Activated T-helper 2 cell treated with anti-CD3 and anti-CD28 coated beads, Interferon-gamma antibody, Interleukin-2, Interleukin-4, amounts not matched to agents 10 μg/mL and 5 μg/mL and 100 μg/mL, durations not matched to agents 14 hours and 24 hours and 36 hours (primary cell): ENCODE measurements at regions of chr5 and their contacts with region 1.

Region 1: DNA sequence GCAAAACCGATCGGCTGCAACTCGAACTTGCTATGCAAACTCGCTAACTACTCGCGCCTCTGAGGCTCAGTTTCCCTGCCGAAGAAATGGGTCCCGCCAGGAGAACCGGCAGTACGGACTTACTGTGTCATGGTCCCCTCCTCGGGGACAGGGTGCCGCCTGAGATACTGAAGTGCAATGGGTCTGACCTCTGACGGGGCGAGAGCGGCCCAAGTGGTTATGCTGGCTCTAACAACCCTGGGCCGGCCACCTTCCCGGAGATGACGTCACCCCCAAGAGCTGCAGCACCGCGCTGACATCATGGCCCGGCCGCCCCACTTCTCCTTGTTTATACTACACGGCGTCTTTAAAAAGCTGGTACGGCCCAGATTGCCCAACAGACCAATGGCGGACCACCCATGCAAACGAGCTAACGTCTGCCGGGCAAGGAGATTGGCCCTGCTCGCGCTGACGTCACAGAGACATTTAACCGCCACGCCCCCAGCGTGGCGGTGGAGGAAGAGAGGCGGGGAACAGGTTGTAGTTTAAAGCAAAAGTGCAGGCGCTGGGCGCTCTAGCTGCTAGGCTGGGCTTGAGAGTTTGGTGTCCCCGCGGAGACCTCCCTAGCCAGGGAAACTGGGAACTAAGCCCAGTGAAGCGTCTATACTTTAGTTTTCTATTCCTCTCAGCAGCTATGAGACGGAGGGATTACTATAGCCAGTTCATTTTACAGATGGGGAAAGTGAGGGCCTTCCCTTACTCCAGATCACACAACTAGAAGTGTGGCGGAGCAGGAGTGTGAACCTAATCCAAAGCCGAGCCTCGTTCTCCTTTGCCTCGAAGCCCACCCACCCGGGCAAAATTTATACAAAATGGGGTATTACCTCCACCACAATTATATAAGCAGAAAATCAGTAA is 654 bp upstream of the RNF44 start:
- DNase-seq: peak; percentile 98
- H3K4me3 Mint-ChIP-seq: peak overlapping the region; percentile 98
- H3K27ac Mint-ChIP-seq: peak overlapping the region; percentile 96
- H3K4me1 Mint-ChIP-seq: peaks cover 58% of the 10 kb centered on the region
- H3K27me3 Mint-ChIP-seq: no peaks in the 10 kb centered on the region

Region 2: DNA sequence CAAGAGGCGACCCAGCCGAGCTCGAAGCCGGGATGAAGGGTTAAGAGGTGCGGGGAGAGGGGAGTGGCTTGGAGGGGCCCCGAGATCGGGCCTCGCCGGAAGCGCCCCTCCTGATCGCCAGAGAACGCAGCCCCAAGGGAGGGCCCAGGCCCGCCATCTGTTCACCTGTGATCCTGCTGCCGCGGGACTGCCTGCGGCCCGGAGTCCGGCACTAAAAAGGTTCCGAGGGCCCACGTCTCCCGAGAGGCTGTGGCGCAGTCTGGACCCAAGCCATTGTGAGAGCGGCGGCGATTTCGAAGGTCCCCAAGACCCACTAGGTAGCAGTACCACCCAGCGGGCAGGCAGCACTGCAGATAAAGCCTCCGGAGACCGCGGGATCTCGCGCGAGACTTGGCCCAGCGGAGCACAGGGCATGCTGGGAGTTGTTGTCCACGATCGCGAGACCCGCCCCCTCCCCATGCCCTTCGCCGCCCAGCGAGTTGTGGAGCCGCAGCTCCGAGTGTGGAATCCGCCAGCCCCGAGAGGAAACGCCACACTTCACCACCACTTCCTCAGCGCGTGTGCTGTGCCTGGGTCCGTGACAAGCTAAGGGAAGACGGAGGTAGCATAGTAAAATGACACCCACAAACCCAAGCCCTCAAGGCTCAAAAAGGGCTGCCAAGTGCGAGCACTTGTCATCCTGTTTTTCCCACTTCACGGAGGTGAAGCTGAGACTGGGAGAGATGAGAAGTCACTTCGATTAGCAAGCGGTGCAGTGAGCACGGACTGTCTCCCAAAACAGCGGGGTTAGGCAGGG is 176.2 kb before region 1 on chr5 and contains the start of gene KIAA1191:
- intact Hi-C with region 1: loop called (anchors 5 kb)
- DNase-seq: peak; percentile 92
- H3K4me3 Mint-ChIP-seq: peak within 1 kb of the TSS; percentile 92
- H3K27ac Mint-ChIP-seq: peak within 1 kb of the TSS; percentile 85
- H3K4me1 Mint-ChIP-seq: peaks cover 24% of the 10 kb centered on the region
- H3K27me3 Mint-ChIP-seq: no peaks in the 10 kb centered on the region
- total RNA-seq, gene KIAA1191: 55.5 and 61.3 TPM in 2 replicates

Region 3: GRCh38 chr5:176388444-176389134 is 149.3 kb before region 1 on chr5 and contains the starts of genes HIGD2A and NOP16:
- intact Hi-C with region 1: loop called (anchors 2 kb)
- DNase-seq: peak; percentile 98
- H3K4me3 Mint-ChIP-seq: peak within 1 kb of the TSS; percentile 97
- H3K27ac Mint-ChIP-seq: peak within 1 kb of the TSS; percentile 99
- H3K4me1 Mint-ChIP-seq: peaks cover 21% of the 10 kb centered on the region
- H3K27me3 Mint-ChIP-seq: no peaks in the 10 kb centered on the region
- total RNA-seq, gene HIGD2A: 102 and 105 TPM in 2 replicates
- total RNA-seq, gene NOP16: 79.6 and 84.0 TPM in 2 replicates

Region 4: DNA sequence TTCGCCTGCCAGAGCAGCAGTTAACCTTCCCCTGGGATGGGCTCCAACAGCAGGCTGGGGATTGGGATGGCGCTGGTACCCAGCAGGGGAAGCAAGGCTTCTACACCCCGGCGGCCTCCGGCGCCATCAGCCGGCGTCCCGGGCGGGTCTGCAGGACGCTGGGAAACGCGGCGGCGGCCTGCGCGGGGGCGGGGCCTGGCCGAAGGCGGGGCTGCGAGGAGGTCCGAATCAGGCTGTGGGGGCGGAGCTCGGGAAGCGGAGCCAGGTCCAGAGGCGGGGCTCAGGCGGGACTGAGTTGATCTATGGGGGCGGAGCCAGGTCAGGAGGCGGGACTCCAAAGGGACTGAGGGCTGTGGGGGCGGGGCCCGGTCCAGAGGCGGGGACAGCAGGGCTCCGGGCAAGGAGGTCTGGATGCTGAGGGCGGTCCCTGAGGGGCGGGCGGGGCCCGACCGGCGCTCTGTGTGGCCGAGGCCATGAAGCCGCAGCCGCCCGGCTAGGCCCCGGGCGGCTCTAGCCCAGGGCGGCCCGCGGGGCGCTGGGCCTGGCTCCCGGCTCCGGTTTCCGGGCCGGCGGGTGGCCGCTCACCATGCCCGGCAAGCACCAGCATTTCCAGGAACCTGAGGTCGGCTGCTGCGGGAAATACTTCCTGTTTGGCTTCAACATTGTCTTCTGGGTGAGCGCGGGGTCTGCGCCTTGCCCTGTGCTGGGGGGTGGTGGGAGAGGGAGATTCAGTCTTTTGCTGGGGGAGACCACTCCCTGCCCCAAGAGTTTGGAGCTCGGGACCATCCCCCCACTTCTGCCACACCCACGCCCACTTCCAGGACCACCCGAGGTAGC is 109.4 kb after region 1 on chr5 and contains the start of gene TSPAN17:
- intact Hi-C with region 1: loop called (anchors 1 kb)
- DNase-seq: peak; percentile 99
- H3K4me3 Mint-ChIP-seq: peak within 1 kb of the TSS; percentile 82
- H3K27ac Mint-ChIP-seq: peak within 1 kb of the TSS; percentile 86
- H3K4me1 Mint-ChIP-seq: peaks cover 35% of the 10 kb centered on the region
- H3K27me3 Mint-ChIP-seq: no peaks in the 10 kb centered on the region
- total RNA-seq, gene TSPAN17: 32.7 and 33.9 TPM in 2 replicates